ENCODE measurements at regions of chr1 and their contacts with region 1.

Region 1: GRCh38 chr1:157073944-157074767 is 25.5 kb downstream of the ETV3L start:
- H3K4me3 Mint-ChIP-seq: peak overlapping the region; percentile 39
- H3K27ac Mint-ChIP-seq: no peak overlapping the region
- H3K4me1 Mint-ChIP-seq: peaks cover 14% of the 10 kb centered on the region
- H3K27me3 Mint-ChIP-seq: peaks cover 20% of the 10 kb centered on the region

Region 2: DNA sequence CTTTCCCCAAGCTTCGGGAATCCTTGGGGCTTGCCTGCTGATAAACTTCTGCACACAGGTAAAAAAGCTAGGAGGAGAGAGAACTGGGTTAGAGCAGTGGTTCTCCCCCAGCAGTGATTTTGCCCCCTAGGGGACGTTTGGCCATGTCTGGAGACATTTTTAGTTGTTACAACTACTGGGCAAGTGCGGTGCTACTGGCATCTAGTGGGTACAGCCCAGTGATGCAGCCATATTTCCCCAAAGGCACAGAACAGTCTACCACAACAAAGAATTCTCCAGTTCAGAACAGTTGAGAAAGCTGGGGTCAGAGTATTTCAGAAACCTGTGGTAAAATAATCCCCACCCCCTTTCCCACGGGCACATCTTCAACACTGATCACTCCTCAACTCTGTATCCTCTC is 112.4 kb before region 1 on chr1:
- intact Hi-C with region 1: loop called (anchors 10 kb)
- H3K4me3 Mint-ChIP-seq: peak overlapping the region; percentile 0
- H3K27ac Mint-ChIP-seq: peak overlapping the region; percentile 88
- H3K4me1 Mint-ChIP-seq: peaks cover 48% of the 10 kb centered on the region
- H3K27me3 Mint-ChIP-seq: no peaks in the 10 kb centered on the region

Region 3: DNA sequence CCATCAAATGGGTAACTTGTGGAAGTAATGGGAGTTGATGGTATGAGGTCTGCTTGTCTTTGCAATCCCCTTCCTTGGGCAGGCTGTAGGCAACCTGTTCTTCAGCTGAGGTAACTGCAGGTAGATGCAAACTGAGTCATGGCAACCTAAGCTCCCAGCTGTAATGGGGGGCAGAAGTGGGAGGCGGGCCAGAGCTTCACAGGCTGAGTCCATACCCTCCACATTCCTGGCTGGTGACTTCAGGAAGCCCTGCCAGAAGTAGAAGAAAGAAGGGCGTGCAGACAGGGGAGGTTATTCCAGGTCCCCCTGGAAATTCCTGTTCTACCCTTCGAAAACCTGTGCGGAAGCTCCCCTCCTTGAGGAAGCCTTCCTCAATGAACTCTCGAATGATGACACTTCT is 73.5 kb before region 1 on chr1:
- intact Hi-C with region 1: loop called (anchors 10 kb)
- H3K4me3 Mint-ChIP-seq: no peak overlapping the region
- H3K27ac Mint-ChIP-seq: no peak overlapping the region
- H3K4me1 Mint-ChIP-seq: peaks cover 32% of the 10 kb centered on the region
- H3K27me3 Mint-ChIP-seq: no peaks in the 10 kb centered on the region

Region 4: GRCh38 chr1:157325220-157325619 is 251.1 kb after region 1 on chr1:
- intact Hi-C with region 1: no loop called
- H3K4me3 Mint-ChIP-seq: no peak overlapping the region
- H3K27ac Mint-ChIP-seq: no peak overlapping the region
- H3K4me1 Mint-ChIP-seq: no peaks in the 10 kb centered on the region
- H3K27me3 Mint-ChIP-seq: peaks cover 17% of the 10 kb centered on the region

Measured in dendritic cell treated with granulocyte-macrophage colony-stimulating factor and Interleukin-4, amounts not matched to agents 40 ng/mL and 50 ng/mL, for 4 days (primary cell).